Aorta (tissue), 5 donors: ENCODE measurements at regions of chr11 and their contacts with region 1.

Region 1: DNA sequence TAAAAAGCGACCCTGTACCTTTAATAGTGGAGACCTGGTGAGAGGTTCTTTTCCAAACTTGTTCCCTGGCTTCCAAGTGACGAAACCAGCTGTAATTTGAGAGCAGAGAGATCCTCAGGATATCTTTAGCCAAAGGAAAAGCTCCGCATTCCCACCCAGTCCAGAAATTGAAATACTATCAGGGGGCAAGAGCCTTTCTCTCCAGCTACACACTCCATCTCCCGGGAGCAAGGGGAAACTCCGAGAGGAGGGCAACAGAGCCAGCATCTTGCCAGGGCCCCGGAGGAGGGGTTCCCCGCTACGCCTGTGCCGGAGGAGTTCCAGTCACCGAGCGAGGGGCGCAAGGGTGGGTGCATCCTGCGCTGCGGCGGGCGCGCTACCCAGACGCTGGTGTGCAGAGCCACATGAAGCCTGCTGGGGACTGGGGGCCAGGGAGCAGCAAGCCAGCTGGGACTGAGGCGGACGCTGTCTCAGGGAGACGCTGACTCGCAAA is at the start of gene FIBIN:
- DNase-seq: peak; percentile 67 to 83
- ATAC-seq: peak; percentile 79
- H3K4me3 ChIP-seq: peak within 1 kb of the TSS; percentile 75 to 87
- H3K27ac ChIP-seq: peak within 1 kb of the TSS; percentile 59 to 74
- H3K4me1 ChIP-seq: peaks cover 0 to 8% of the 10 kb centered on the region in 2 donors
- H3K27me3 ChIP-seq: no peaks in the 10 kb centered on the region
- total RNA-seq, gene FIBIN: 80.9 to 169 TPM

Region 2: GRCh38 chr11:26753723-26754504 is 240.1 kb before region 1 on chr11:
- intact Hi-C with region 1: loop called (anchors 5 kb)
- DNase-seq: peak in 1 of 2 donors; percentile 44
- ATAC-seq: peak; percentile 84
- H3K4me3 ChIP-seq: no peak overlapping the region
- H3K27ac ChIP-seq: no peak overlapping the region
- H3K4me1 ChIP-seq: peaks cover 0 to 3% of the 10 kb centered on the region in 2 donors
- H3K27me3 ChIP-seq: no peaks in the 10 kb centered on the region

Region 3: DNA sequence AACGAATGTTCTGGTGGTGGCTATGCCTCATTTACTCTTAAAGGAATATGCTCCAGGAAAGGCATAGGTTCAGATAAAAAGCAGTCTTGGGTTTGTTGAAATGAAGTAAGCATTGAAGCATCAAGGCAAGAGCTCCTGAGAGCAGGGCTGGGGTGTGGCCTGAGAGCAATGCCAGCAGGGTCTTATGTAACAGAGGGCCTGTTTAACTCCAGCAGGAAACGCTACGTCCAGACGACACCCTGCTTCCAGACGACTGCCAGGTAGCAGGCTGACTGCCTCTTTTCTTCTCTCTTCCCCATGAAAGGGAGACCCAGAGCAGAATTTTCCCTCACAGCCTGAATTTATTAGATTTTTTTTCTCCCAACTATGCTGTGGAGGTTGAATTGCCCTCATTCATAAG is 145.0 kb before region 1 on chr11:
- intact Hi-C with region 1: loop called (anchors 2 to 5 kb)
- DNase-seq: peak; percentile 55 to 76
- ATAC-seq: peak; percentile 26
- H3K4me3 ChIP-seq: no peak overlapping the region
- H3K27ac ChIP-seq: peak overlapping the region in 1 of 2 donors; percentile 73
- H3K4me1 ChIP-seq: peaks cover 0 to 5% of the 10 kb centered on the region in 2 donors
- H3K27me3 ChIP-seq: no peaks in the 10 kb centered on the region

Region 4: DNA sequence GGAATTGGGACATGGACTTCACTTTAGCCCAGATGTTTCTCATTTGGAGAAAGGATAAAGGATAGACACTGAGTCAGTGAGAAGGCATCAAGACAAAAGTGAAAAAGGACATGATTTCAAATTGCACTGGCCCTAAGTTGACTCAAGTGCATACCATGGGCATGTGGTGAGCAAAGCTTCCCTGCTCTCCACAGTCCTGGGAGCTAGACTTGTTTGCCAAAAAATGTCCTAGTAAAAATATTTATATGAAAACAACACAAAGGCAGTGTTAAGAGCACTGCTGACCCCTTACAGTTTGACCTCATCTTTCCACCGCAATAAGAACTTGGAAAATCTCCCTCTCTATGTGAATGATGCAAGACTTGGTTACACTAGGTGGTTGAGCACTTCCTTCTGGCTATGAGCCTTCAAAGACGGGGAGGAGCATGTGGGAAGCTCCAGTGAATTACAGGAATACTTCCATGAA is 46.6 kb before region 1 on chr11:
- intact Hi-C with region 1: loop called (anchors 5 kb)
- DNase-seq: peak in 1 of 2 donors; percentile 64
- ATAC-seq: peak; percentile 93
- H3K4me3 ChIP-seq: no peak overlapping the region
- H3K27ac ChIP-seq: peak overlapping the region in 1 of 2 donors; percentile 48
- H3K4me1 ChIP-seq: peaks cover 2 to 16% of the 10 kb centered on the region in 2 donors
- H3K27me3 ChIP-seq: no peaks in the 10 kb centered on the region

Region 5: DNA sequence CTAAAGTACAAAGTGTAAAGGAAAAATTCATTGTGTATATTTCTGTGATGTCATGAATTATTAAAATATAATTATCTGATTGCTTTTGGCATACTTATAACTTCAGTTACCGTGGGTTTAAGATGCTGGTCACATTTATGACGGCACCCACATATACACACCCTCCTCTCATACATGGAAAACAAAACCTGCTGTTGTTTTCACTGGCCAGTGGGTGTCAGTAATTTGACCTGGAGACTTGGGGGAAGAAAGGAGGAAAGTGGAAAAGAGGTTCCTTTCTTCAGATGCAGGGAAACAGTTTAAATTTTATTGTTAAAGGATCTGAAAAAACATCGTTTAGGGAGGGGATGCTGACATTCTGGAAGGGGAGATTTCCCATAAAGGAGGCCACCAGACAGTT is 45.9 kb after region 1 on chr11:
- intact Hi-C with region 1: no loop called
- DNase-seq: no peak
- ATAC-seq: no peak
- H3K4me3 ChIP-seq: no peak overlapping the region
- H3K27ac ChIP-seq: peak overlapping the region in 1 of 2 donors; percentile 4
- H3K4me1 ChIP-seq: peaks cover 0 to 5% of the 10 kb centered on the region in 2 donors
- H3K27me3 ChIP-seq: no peaks in the 10 kb centered on the region

Region 6: DNA sequence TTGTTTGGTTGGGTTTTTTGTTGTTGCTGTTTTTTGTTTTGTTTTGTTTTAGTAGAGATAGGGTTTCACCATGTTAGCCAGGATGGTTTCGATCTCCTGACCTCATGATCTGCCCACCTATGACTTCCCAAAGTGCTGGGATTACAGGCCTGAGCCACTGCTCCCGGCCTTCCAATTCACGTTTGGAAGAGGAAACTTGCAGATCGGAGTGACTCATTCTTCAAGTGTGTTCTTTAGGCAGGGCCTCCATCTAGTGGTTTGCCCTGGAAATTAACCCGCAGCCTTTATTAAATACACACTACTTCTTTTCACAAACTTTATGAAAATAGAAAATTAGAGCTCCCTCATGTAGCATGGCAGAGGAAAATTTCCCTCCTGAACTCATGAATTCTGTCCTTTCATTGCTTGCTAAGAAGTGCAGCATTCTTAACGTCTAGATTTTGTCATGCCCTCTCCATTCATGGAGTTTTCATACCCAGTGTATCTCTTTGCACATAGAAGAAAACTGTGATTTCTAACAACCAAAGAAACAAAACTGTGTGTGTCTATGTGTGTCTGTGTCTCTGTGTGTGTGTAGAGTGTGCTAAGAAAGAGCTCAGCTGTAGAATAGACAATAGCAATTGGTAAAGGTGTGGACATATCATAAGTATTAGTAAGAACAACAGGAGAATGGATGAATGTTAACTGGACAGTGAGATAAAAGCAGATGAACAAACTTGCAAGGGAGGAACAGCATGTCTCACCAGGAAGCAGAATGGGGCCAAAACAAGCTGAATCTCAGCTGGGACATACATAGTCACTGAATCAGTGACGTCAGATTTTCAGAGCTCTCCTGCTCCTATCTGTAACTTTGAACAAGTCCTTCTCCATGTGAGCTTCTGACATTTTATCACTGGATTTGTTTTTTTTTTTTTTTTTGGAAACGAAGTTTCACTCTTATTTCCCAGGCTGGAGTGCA is 165.0 kb after region 1 on chr11:
- intact Hi-C with region 1: loop called (anchors 2 to 5 kb)
- DNase-seq: peak; percentile 52 to 67
- ATAC-seq: peak; percentile 87
- H3K4me3 ChIP-seq: no peak overlapping the region
- H3K27ac ChIP-seq: no peak overlapping the region
- H3K4me1 ChIP-seq: no peaks in the 10 kb centered on the region
- H3K27me3 ChIP-seq: no peaks in the 10 kb centered on the region